ENCODE measurements at regions of chr18 and their contacts with region 1.

Region 1: DNA sequence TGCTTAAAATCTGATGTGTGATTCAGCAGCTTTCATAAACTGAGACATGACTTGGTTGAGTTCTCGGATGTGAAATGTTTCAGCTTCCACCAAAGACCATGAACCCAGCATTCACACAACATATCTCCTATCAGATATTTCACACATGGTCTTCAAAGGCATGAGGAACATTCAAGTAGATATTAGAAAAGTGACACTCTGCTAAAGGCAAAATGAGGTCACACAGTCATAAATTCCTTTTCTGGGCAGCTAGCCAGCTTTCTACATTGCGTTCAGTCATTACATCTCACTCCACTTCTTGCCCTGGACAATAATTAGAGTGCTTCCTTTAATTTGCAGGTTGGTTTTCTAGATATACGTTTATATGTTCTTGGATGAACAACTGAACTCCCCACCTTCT is 96.7 kb downstream of the GAREM1 start:
- DNase-seq: no peak
- ATAC-seq: no peak
- H3K4me3 ChIP-seq: no peak overlapping the region
- H3K27ac ChIP-seq: no peak overlapping the region
- H3K4me1 ChIP-seq: peaks cover 52% of the 10 kb centered on the region
- H3K27me3 ChIP-seq: no peaks in the 10 kb centered on the region
- CTCF ChIP-seq: no peak
- EP300 ChIP-seq: no peak
- POLR2A ChIP-seq: no peak
- RAD21 ChIP-seq: no peak

Region 2: GRCh38 chr18:31617031-31617717 is 756.8 kb before region 1 on chr18:
- CTCF ChIA-PET with region 1: no interaction called
- POLR2A ChIA-PET with region 1: no interaction called
- in situ Hi-C with region 1: no loop called
- intact Hi-C with region 1: no loop called
- DNase-seq: no peak
- ATAC-seq: no peak
- H3K4me3 ChIP-seq: no peak overlapping the region
- H3K27ac ChIP-seq: no peak overlapping the region
- H3K4me1 ChIP-seq: peaks cover 16% of the 10 kb centered on the region
- H3K27me3 ChIP-seq: no peaks in the 10 kb centered on the region
- CTCF ChIP-seq: no peak
- EP300 ChIP-seq: no peak
- POLR2A ChIP-seq: no peak
- RAD21 ChIP-seq: no peak

Region 3: DNA sequence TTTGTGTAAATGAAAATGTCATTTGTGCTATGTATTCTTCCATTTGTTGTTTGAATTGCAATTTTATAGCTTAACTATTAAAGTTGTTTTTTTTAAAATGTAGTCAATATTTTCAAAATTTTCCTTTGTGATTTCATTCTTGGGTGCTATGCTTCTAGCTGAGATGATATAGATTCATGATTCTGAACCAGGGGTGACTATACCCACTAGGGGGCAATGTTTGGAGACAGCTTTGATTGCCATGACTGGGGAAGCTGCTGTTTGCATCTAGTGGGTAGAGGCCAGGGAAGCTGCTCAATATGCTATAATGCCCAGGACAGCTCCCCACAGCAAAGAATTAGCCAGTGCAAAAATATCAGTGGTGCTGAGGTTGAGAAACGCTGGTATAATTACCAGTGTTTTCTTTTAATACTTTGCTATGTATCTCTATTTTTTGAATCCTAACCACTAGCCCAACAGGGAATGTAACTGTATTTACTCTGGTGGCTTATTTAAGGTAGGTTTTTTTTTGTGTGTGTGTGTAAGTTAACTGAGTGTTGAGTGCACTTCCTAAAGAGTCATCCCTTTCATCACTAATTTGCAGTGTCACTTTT is 84.4 kb before region 1 on chr18:
- CTCF ChIA-PET with region 1: no interaction called
- POLR2A ChIA-PET with region 1: no interaction called
- in situ Hi-C with region 1: no loop called
- intact Hi-C with region 1: loop called (anchors 5 kb)
- DNase-seq: peak; percentile 66
- ATAC-seq: peak; percentile 95
- H3K4me3 ChIP-seq: no peak overlapping the region
- H3K27ac ChIP-seq: no peak overlapping the region
- H3K4me1 ChIP-seq: no peaks in the 10 kb centered on the region
- H3K27me3 ChIP-seq: no peaks in the 10 kb centered on the region
- CTCF ChIP-seq: peak; percentile 75
- EP300 ChIP-seq: no peak
- POLR2A ChIP-seq: no peak
- RAD21 ChIP-seq: peak; percentile 70

Region 4: DNA sequence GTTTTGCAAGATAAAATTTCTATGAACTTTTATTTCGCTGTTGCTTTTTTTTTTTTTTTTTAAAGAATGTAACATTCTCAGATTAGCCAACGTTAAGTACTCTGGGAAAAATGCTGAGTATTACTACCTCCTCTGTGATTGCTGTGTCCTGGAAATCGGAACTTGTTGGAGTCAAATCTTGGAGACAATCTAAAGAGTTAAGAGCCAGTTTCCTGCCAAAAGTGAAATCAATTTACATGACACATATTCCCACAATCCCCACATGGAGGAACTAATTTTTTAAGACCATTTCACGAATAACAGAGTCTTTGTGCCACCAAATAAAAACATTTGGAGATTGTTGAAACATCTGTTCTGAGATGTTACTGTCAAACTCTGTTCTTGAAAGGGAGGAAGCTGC is 56.3 kb before region 1 on chr18:
- CTCF ChIA-PET with region 1: no interaction called
- POLR2A ChIA-PET with region 1: no interaction called
- in situ Hi-C with region 1: no loop called
- intact Hi-C with region 1: loop called (anchors 5 kb)
- DNase-seq: no peak
- ATAC-seq: no peak
- H3K4me3 ChIP-seq: no peak overlapping the region
- H3K27ac ChIP-seq: peak overlapping the region; percentile 31
- H3K4me1 ChIP-seq: peaks cover 32% of the 10 kb centered on the region
- H3K27me3 ChIP-seq: no peaks in the 10 kb centered on the region
- CTCF ChIP-seq: no peak
- EP300 ChIP-seq: no peak
- POLR2A ChIP-seq: no peak
- RAD21 ChIP-seq: no peak

Region 5: DNA sequence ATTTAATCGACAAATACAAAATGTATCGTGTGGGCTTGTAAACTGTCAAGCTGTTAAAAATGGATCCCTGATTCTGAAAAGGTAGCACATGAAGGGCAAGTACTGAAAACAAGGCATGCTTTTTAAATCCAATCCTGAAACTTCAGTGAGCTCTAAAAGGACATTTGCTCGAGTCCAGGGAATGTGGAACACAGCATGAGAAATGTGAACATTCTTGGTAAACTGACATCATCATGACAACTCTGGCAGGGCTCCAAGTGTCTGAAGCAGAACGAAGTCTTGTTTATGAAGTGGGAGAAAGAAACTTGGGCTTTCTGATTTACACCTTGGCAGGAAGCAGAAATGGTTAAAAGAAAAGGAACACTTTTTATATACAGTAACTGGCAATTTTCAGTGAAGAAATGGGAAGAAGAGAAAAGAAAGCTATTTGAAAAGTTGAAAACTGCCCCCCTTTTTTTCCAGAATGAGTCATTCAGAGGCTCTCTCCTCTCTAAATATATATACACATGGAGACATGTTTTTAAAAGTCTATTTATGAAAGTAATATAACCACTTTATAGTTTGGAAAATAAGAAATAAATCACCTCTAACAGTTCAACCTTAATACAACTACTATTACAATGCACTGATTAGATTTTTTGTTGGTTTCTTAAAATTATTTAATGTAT is 24.1 kb before region 1 on chr18:
- CTCF ChIA-PET with region 1: no interaction called
- POLR2A ChIA-PET with region 1: interaction called, 7 read pairs
- in situ Hi-C with region 1: no loop called
- intact Hi-C with region 1: loop called (anchors 2 kb)
- DNase-seq: peak; percentile 82
- ATAC-seq: no peak
- H3K4me3 ChIP-seq: no peak overlapping the region
- H3K27ac ChIP-seq: peak overlapping the region; percentile 39
- H3K4me1 ChIP-seq: peaks cover 28% of the 10 kb centered on the region
- H3K27me3 ChIP-seq: no peaks in the 10 kb centered on the region
- CTCF ChIP-seq: no peak
- EP300 ChIP-seq: 0 out of 4 replicates have a peak, but pooled peaks of 1 of the 2 experiments have one; percentile 13
- POLR2A ChIP-seq: no peak
- RAD21 ChIP-seq: no peak

Region 6: DNA sequence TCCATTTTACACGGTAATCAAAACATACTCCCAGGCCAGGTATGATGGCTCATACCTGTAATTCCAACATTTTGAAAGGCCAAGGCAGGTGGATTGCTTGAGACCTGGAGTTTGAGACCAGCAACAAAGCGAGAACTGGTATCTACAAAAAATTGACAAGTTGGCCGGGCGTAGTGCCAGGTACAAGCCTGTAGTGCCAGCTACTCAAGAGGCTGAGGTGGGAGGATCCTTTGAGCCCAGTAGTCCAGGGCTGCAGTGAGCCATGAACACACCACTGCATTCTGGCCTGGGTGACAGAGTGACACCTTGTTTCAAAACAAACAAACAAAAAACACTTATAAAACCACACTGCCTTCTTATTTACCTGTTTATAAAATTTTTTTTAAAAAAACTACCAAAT is 15.9 kb after region 1 on chr18:
- CTCF ChIA-PET with region 1: no interaction called
- POLR2A ChIA-PET with region 1: no interaction called
- in situ Hi-C with region 1: no loop called
- intact Hi-C with region 1: no loop called
- DNase-seq: no peak
- ATAC-seq: no peak
- H3K4me3 ChIP-seq: no peak overlapping the region
- H3K27ac ChIP-seq: no peak overlapping the region
- H3K4me1 ChIP-seq: no peaks in the 10 kb centered on the region
- H3K27me3 ChIP-seq: no peaks in the 10 kb centered on the region
- CTCF ChIP-seq: no peak
- EP300 ChIP-seq: no peak
- POLR2A ChIP-seq: no peak
- RAD21 ChIP-seq: no peak

Region 7: DNA sequence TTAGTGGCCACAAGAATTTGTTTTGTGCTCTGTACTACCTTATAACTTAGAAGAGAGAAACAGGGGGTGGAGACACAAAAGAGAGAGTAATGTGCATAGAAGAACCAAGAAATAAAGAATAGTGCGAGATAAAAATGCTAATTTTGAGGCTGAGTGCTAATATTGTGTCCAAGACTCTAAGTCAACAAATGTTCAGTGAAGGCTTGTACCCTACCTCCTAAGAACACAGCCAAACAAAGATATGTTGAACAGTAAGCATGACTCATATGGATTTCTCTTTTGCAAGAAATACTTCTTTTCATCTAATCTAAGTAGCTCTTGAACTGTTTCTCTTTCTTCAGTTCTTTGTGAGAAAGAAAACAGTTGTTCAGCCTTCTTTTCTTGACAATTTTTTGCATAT is 51.5 kb after region 1 on chr18:
- CTCF ChIA-PET with region 1: no interaction called
- POLR2A ChIA-PET with region 1: no interaction called
- in situ Hi-C with region 1: no loop called
- intact Hi-C with region 1: loop called (anchors 5 kb)
- DNase-seq: peak; percentile 16
- ATAC-seq: peak; percentile 35; the same call in 2 of the 3 replicates
- H3K4me3 ChIP-seq: no peak overlapping the region
- H3K27ac ChIP-seq: no peak overlapping the region
- H3K4me1 ChIP-seq: peaks cover 24% of the 10 kb centered on the region
- H3K27me3 ChIP-seq: no peaks in the 10 kb centered on the region
- CTCF ChIP-seq: no peak
- EP300 ChIP-seq: no peak
- POLR2A ChIP-seq: no peak
- RAD21 ChIP-seq: no peak

Region 8: DNA sequence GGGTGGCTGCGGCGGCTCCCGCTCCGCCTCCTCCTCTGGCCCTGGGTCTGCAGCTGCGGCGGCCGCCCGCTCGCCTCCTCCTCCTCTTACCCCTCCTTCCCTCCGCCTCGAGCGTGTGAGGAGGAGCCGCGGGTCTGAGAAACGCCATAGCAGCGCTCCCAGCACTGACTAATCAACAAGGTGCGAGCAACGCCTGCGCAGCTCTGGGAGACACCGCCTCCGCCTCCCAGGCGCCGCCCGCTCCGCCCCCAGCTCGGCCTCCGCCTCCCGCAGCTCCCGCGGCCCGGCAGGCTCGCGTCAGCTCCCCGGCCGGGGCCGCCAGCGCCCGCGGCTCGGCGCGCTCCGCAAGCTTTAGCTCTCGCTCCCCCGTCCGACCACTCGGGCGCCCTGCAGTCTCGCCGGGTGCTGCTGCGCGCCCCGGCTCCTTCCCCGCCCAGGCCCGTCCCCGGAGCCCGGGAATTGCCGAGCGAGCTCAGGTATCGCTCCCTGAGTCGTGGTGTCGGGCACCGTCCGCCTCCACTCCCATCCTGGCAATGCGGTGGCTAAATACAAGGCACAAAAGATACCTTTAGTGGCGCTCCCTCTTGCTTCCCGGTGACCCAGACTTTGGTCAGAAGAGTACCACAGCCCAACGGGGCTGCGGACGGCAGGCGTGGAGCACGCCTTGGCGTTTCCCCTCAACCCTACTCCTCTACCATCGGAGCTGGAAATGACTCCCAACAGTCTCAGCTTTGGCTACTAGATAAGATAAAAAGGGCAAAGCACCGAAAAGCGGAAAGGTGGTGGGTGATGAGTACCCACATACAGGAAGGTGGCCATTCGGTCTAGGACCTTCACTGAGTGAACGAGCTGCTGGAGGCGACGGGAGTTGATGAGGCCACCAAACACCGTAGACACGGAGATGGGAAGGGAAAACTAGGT is 97.0 kb after region 1 on chr18 and contains the start of gene GAREM1:
- CTCF ChIA-PET with region 1: no interaction called
- POLR2A ChIA-PET with region 1: interaction called, 21 read pairs
- in situ Hi-C with region 1: no loop called
- intact Hi-C with region 1: loop called (anchors 1 kb)
- DNase-seq: peak; percentile 87
- ATAC-seq: peak; percentile 95
- H3K4me3 ChIP-seq: peak within 1 kb of the TSS; percentile 76 to 88 (median 87)
- H3K27ac ChIP-seq: peak within 1 kb of the TSS; percentile 45
- H3K4me1 ChIP-seq: peaks cover 21% of the 10 kb centered on the region
- H3K27me3 ChIP-seq: no peaks in the 10 kb centered on the region; a peak in 3 of 5 replicates
- CTCF ChIP-seq: peak; percentile 81
- EP300 ChIP-seq: no peak
- POLR2A ChIP-seq: peak; percentile 80 to 86
- RAD21 ChIP-seq: peak; percentile 96
- total RNA-seq, gene GAREM1: 2.9 TPM in 2 replicates